ENCODE measurements at regions of chr16 and their contacts with region 1.

Region 1: GRCh38 chr16:70438969-70439862 is at the start of gene ST3GAL2:
- DNase-seq: peak; percentile 95 to 97 (median 96)
- H3K4me3 ChIP-seq: peak within 1 kb of the TSS; percentile 81
- H3K27ac ChIP-seq: peak within 1 kb of the TSS; percentile 30 to 70
- H3K4me1 ChIP-seq: peaks cover 7% of the 10 kb centered on the region
- H3K27me3 ChIP-seq: no peaks in the 10 kb centered on the region
- CTCF ChIP-seq: peak in 1 of 3 donors; percentile 22
- EP300 ChIP-seq: no peak
- POLR2A ChIP-seq: no peak
- total RNA-seq, gene ST3GAL2: 12.3 to 49.7 (median 25.0) TPM

Region 2: DNA sequence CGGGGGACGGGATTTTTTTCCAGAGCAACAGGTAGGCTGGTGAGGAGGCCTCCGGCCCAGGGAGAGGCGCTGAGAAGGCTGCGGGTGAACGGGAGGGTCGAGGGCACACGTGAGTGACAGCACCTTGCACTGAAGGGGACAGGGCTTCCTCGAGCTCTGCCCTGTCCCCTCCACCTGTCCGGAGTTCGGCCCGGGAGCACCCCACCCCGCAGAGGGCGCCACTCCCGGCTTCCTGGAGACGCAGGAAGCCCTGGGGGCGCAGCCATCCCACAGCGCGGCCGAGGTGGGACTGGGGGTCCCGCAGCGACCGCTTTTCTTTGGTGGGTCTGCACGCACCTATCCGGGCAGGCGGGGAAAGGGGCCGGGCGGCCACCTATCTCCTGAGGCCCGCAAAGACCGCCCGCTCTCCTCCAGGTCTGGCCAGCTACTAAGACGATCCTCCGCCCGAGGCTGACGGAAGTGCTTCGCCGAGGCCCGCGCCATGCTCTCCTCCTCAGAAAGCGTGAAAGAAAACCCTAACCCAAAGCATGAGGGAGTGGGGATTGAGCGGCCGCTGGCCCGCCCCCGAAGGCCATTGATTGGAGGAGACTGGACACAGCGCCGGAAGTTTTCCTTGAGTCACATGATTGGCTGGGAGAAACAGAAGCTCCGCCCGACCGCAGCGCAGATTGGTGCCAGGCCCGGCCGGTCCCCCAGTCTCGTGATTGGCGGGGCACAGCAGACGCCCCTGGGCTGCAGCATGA is 58.2 kb before region 1 on chr16:
- intact Hi-C with region 1: loop called in 1 of 4 experiments (anchors 5 kb)
- DNase-seq: peak; percentile 95 to 97 (median 96)
- H3K4me3 ChIP-seq: peak overlapping the region; percentile 91
- H3K27ac ChIP-seq: peak overlapping the region in 1 of 2 donors; percentile 84
- H3K4me1 ChIP-seq: peaks cover 4% of the 10 kb centered on the region
- H3K27me3 ChIP-seq: no peaks in the 10 kb centered on the region
- CTCF ChIP-seq: peak; percentile 25 to 46 (median 30)
- EP300 ChIP-seq: no peak
- POLR2A ChIP-seq: peak; percentile 42

Region 3: GRCh38 chr16:70767377-70768202 is 328.4 kb after region 1 on chr16:
- intact Hi-C with region 1: no loop called
- DNase-seq: no peak
- H3K4me3 ChIP-seq: no peak overlapping the region
- H3K27ac ChIP-seq: no peak overlapping the region
- H3K4me1 ChIP-seq: no peaks in the 10 kb centered on the region
- H3K27me3 ChIP-seq: no peaks in the 10 kb centered on the region
- CTCF ChIP-seq: no peak
- EP300 ChIP-seq: no peak
- POLR2A ChIP-seq: no peak

Measured in ovary (tissue), 10 donors.